ENCODE measurements at regions of chr1 and their contacts with region 1.

Region 1: GRCh38 chr1:28893403-28894102 is 20.8 kb upstream of the EPB41 start:
- DNase-seq: no peak
- H3K4me3 ChIP-seq: no peak overlapping the region
- H3K27ac ChIP-seq: no peak overlapping the region
- H3K4me1 ChIP-seq: peaks cover 0 to 5% (median 1%) of the 10 kb centered on the region in 4 donors
- H3K27me3 ChIP-seq: no peaks in the 10 kb centered on the region
- CTCF ChIP-seq: no peak
- EP300 ChIP-seq: no peak
- POLR2A ChIP-seq: no peak

Region 2: DNA sequence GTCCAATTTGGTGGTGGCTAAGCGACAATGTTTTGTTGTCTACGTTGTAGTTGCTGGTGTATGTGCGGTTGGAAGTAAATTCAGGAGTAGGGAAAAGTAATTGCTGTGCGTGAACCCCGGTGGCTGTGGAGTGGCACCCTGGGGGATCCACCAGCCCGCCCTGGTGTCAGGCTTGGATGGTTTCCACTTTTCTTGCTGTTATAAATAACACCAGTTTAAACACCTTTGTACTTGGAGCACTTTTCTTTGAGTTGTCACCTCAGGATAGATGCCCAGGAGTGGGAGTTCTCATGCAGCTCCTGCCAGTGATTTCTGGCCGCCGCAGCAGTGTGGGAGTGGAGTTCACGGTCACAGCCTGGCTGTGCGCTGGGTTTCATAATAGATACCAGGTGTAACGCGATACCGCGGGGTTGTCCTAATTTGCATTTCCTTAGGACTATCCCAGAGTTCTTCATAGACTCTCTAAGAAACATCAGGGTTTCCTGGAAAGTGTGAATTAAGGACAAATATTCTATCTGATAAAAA is 242.9 kb after region 1 on chr1:
- in situ Hi-C with region 1: no loop called
- intact Hi-C with region 1: no loop called
- DNase-seq: no peak
- H3K4me3 ChIP-seq: no peak overlapping the region
- H3K27ac ChIP-seq: no peak overlapping the region
- H3K4me1 ChIP-seq: peaks cover 0 to 6% (median 3%) of the 10 kb centered on the region in 4 donors
- H3K27me3 ChIP-seq: no peaks in the 10 kb centered on the region
- CTCF ChIP-seq: no peak
- EP300 ChIP-seq: no peak
- POLR2A ChIP-seq: no peak

Region 3: DNA sequence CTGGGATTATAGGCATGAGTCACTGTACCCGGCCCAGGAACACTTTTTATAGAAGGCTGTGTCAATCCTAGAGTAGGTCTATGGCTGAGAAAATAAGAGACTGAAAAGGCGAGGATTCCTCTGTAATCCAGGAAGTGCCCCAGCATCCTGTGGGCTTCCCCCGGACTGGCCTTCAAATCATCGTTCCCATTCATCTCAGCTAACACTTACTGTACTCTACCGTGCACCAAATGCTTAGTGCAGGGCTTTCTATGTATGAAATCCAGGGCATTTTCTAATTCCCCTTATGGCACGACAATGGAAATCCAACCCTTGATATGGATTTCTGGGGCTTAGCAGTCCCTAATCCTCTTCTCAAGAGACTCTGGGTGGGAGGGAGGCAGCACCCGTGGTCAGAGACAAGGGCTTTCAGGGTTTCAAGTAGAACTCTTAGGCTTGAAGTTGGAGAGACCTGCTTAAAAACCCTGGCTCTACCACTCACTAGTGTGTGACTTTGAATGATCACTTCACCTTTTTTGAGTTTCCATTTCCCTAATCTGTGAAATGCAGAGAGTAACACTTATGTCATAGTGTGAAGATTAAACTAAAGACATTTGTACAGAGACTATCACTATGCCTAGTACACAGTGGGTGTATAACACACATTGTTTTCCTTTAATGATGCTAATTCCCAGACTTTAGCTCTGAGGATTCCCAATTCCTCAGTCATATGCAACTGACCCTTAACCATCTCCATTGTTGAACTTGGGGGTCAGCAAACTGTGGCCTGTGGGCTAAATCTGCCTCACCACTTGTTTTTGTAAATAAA is 316.9 kb after region 1 on chr1:
- in situ Hi-C with region 1: loop called in 1 of 4 experiments (anchors 10 kb)
- intact Hi-C with region 1: no loop called
- DNase-seq: no peak
- H3K4me3 ChIP-seq: no peak overlapping the region
- H3K27ac ChIP-seq: no peak overlapping the region
- H3K4me1 ChIP-seq: no peaks in the 10 kb centered on the region
- H3K27me3 ChIP-seq: no peaks in the 10 kb centered on the region
- CTCF ChIP-seq: no peak
- EP300 ChIP-seq: no peak
- POLR2A ChIP-seq: no peak

Measured in transverse colon (tissue), 4 donors.